Activated CD4-positive, alpha-beta T cell treated with anti-CD3 and anti-CD28 coated beads for 36 hours (primary cell): ENCODE measurements at regions of chr9 and their contacts with region 1.

Region 1: GRCh38 chr9:105557771-105558610 is at the start of gene FKTN:
- DNase-seq: peak; percentile 91
- ATAC-seq: peak; percentile 97
- H3K4me3 Mint-ChIP-seq: peak within 1 kb of the TSS; percentile 94
- H3K27ac Mint-ChIP-seq: peak within 1 kb of the TSS; percentile 85
- H3K4me1 Mint-ChIP-seq: peaks cover 18% of the 10 kb centered on the region
- H3K27me3 Mint-ChIP-seq: no peaks in the 10 kb centered on the region
- total RNA-seq, gene FKTN: 12.1 to 16.0 TPM

Region 2: DNA sequence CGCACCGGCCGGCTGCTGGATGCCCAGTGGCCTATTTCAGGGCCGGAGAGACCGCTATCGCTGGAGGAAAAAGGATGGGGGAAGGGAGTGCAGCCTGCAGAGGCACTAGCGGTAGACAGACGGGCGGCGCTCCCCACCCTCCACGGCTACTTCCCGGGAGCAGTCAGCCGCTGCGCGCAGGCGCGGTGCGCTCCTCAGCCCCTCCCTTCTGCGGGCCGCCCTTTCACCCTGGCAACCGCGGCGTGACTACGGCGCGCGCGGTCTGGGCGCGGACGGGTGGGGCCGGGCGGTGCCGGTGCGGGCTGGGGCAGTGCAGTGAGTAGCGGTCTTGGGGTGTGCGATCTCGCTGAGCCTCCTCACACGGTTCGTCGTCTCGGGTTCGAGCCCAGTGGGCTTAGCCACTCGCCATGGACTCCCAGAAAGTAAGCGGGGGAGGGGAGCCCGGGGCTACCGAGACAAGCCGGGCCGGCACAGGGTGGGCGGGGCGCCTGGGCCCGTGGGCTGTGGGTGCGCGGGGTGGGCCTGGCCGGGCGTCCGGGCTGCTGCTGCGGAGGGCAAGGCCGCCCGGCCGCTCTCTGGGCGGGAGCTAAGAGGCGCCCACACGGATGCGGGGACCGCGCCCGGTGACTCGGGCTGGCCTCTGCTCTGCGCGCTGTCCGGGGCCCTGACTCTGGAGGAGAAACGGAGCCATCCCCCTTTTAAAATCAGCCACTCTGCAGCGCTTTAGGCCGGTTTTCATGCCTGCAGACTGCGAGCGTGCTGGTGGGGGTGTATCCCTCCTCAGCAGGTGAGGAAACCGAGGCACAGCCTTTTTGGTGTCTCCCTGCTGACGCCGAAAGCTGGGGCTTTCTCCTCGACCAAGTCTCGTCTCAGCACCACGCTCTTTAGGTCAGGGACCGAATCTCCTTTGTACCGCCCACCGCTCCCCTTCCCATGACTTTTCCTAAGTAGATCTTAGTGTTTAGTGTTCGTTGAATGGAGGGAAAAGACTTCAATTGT is 109.9 kb before region 1 on chr9 and contains the start of gene FSD1L:
- CTCF ChIA-PET with region 1: no interaction called
- POLR2A ChIA-PET with region 1: no interaction called
- intact Hi-C with region 1: loop called in 1 of 2 experiments (anchors 1 kb)
- DNase-seq: peak; percentile 91
- ATAC-seq: peak; percentile 96
- H3K4me3 Mint-ChIP-seq: peak within 1 kb of the TSS; percentile 78
- H3K27ac Mint-ChIP-seq: peak within 1 kb of the TSS; percentile 44
- H3K4me1 Mint-ChIP-seq: peaks cover 9% of the 10 kb centered on the region
- H3K27me3 Mint-ChIP-seq: no peaks in the 10 kb centered on the region
- total RNA-seq, gene FSD1L: 2.4 to 3.0 TPM